ENCODE measurements at regions of chr15 and their contacts with region 1.

Region 1: GRCh38 chr15:40274350-40275274 is 8.3 kb downstream of the ANKRD63 start:
- DNase-seq: no peak
- H3K4me3 ChIP-seq: no peak overlapping the region
- H3K27me3 ChIP-seq: peaks cover 6% of the 10 kb centered on the region; the same call in 1 of the 2 replicates
- CTCF ChIP-seq: peak; percentile 100

Region 2: DNA sequence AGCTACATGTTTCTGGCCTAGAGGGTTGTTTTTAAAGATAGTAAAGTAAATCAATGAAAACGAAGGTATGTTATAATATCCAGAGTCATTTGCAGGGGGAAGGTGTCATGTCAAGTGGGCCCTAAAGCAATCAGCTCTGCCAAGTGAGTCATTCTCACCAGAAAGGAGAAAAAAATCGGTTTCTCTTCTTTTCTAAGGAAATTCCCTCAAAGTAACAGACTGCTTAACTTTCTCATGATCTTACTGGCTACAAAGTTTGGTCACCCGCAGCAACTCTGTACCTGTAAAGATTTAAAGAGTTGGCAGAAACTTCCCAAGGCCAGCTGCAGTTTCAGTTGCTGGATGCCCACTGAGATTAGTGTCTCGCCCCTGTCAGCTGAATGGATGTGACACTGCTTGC is 486.5 kb before region 1 on chr15:
- CTCF ChIA-PET with region 1: interaction called, 11 read pairs
- POLR2A ChIA-PET with region 1: no interaction called
- DNase-seq: no peak
- H3K4me3 ChIP-seq: no peak overlapping the region
- H3K27me3 ChIP-seq: no peaks in the 10 kb centered on the region
- CTCF ChIP-seq: no peak

Region 3: GRCh38 chr15:40108855-40109735 is 165.5 kb before region 1 on chr15 and contains the start of gene BMF:
- CTCF ChIA-PET with region 1: interaction called, 15 read pairs
- POLR2A ChIA-PET with region 1: no interaction called
- DNase-seq: peak; percentile 85
- H3K4me3 ChIP-seq: peak within 1 kb of the TSS; percentile 73
- H3K27me3 ChIP-seq: peaks cover 7% of the 10 kb centered on the region
- CTCF ChIP-seq: peak; percentile 45
- polyA plus RNA-seq, gene BMF: 5.8 and 8.3 TPM in 2 replicates

Region 4: DNA sequence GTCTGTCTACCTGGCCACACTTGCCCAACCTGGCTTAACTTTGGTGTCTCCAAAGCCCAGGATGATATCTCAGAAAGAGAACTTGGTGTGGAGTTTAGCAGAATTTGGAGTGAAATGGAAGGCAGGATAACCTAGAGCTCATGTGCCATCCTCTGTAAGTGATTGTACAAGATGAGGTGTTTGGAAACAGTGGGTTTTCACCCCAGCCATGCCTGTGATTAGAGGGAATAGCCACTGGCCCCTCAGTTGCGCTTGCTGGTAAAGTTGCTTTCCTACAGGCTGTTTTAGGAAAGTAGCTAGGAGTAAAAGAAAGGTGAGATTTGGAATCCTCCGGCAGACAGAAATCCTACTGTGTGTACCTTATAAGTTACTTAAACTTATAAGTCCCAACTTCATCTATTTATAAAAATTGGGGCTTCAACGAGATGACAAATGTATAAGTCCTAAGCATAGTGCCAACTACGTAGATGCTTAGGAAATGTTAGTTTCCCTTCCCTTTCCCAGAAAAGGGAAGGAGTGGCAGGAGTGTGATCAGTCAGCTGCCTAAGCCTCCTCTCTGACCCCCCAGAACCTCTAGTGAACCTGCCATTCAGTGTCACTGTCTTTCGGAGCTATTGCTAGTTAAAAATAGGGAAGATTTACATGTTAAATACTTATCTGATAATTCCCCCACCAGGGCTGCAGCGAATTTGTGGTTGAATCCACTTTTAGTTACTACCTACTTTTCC is 152.5 kb before region 1 on chr15:
- CTCF ChIA-PET with region 1: no interaction called
- POLR2A ChIA-PET with region 1: no interaction called
- DNase-seq: no peak
- H3K4me3 ChIP-seq: no peak overlapping the region
- H3K27me3 ChIP-seq: peaks cover 7% of the 10 kb centered on the region; the same call in 1 of the 2 replicates
- CTCF ChIP-seq: no peak

Region 5: GRCh38 chr15:40238532-40239403 is 35.8 kb before region 1 on chr15 and contains the start of gene PAK6:
- CTCF ChIA-PET with region 1: interaction called, 63 read pairs
- POLR2A ChIA-PET with region 1: no interaction called
- DNase-seq: no peak
- H3K4me3 ChIP-seq: peak within 1 kb of the TSS; percentile 35
- H3K27me3 ChIP-seq: peaks cover 10% of the 10 kb centered on the region
- CTCF ChIP-seq: no peak
- polyA plus RNA-seq, gene PAK6: not detected in 2 replicates

Region 6: DNA sequence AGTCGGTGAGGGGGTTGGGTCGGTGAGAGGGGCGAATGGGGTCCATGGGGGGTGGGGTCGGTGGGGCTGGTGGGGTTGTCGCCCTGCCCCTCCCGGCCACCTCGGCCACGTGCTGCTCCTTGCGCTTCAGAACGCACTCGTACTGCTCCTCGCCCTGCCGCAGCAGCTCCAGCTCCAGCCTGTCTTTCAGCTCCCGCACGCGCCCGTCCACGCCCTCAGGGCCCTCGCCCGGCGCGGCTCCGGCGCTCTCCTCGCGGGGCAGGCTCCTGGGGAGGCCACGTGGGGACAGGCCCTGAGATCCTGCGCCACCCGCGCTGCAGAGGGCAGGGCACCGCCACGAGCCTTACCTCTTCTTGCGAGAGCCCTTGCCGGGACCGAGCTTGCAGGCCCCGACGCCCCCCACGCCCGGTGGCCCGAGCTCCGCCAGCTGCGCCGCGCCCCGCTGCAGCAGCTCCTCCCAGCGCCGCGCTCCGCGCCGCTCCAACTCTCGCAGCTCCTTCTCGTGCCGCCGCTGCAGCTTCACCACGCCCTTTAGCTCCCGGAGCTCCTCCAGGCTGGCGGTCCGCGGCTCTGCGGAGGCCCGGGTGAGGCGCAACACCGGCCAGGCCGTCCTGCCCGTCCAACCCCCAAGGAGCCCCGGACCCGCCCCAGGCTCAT is 16.4 kb after region 1 on chr15:
- CTCF ChIA-PET with region 1: interaction called, 67 read pairs
- POLR2A ChIA-PET with region 1: no interaction called
- DNase-seq: no peak
- H3K4me3 ChIP-seq: peak overlapping the region; percentile 27
- H3K27me3 ChIP-seq: peaks cover 16% of the 10 kb centered on the region
- CTCF ChIP-seq: no peak

Region 7: GRCh38 chr15:40338041-40338657 is 63.5 kb after region 1 on chr15:
- CTCF ChIA-PET with region 1: interaction called, 58 read pairs
- POLR2A ChIA-PET with region 1: no interaction called
- DNase-seq: no peak
- H3K4me3 ChIP-seq: no peak overlapping the region
- H3K27me3 ChIP-seq: no peaks in the 10 kb centered on the region
- CTCF ChIP-seq: peak; percentile 74

Region 8: DNA sequence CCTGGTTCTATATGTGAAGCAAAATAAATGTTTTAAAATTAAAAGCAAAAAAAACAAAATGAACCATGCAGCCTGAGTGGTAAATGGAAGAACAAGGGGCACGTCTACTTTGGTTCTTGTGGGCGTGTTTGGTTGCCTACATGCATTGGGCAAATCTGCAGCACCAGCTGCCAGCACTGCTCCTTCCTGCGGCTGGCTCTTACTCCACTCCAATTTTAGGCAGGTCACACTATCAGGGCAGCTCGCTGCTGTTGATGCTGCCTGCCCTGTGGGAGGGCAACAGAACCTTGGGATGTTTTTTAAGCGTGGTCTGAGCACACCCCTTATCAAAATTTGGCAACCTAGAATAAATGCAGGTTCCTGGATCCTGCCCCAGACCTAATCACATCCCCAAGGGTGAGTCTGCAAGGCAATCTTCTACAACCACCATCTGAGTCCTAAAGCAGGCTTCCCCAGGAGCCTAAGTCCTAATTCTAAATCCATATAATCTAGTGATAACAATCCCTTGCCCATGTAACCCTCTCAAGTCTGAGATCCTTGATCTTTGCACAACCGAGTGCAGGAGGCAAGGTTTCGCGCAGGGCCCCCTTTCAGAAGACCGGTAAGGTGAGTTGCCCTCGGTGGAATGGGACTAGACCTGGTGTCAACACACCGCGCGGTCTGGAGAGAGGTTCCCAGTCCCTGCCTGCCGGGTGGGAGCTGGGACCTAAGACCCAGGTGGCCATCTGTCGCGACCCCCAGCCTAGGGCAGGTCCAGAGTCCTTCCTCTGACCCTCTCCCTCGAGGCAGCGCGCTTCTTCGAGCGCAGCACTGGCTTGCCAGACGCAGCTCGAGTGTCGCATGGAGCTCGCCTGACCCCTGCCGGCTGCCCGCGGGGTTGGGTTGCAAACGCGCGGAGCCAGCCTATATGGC is 146.9 kb after region 1 on chr15:
- CTCF ChIA-PET with region 1: interaction called, 64 read pairs
- POLR2A ChIA-PET with region 1: interaction called, 3 read pairs
- DNase-seq: no peak
- H3K4me3 ChIP-seq: no peak overlapping the region
- H3K27me3 ChIP-seq: no peaks in the 10 kb centered on the region
- CTCF ChIP-seq: peak; percentile 99

Measured in BJ (cell line).